Gastrocnemius medialis (tissue), 4 donors: ENCODE measurements at regions of chr1 and their contacts with region 1.

Region 1: DNA sequence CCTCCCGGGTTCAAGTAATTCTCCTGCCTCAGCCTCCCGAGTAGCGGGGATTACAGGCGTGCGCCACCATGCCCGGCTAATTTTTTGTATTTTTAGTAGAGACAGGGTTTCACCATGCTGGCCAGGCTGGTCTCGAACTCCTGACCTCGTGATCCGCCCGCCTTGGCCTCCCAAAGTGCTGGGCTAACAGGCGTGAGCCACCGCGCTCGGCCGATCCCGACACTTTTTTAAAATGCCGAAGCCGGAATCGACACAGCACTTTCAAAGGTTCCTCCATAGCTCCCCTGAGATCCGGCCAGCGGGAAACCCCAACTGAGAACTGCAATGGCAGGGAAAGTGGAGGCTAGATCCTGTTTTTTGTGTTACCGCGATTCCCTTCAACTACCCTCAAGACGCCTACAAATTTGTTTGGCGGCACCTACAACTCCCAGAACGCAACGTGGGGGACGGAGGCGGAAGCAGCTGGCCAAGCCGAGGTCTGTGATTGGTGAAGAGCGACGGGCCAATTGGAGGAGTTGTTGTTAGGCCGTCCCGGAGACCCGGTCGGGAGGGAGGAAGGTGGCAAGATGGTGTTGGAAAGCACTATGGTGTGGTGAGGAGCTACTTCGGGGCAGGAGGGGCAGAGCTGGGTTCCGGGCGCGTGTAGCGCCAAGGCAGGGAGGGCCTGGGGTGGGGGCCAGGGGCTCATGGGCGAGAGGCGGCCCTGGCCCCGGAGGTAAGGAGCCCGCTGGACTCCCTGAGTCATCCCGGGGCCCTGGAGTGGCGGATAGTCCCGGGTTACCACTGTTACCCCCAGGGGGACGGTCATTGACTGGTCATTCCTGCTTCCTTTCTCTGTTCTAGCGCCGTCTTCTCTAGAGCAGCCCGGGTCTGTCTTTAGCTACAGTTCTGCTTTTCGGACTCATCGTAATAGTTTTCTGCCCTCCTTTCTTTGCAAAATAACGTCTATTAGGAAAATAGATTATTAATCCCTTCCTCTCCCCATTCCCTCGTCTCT is at the start of gene PSMD4:
- DNase-seq: peak; percentile 96 to 97
- ATAC-seq: peak; percentile 98 to 99
- H3K4me3 ChIP-seq: peak within 1 kb of the TSS; percentile 81 to 99 (median 89)
- H3K27ac ChIP-seq: peak within 1 kb of the TSS; percentile 90 to 99 (median 97)
- H3K4me1 ChIP-seq: peaks cover 19 to 27% of the 10 kb centered on the region in 2 donors
- H3K27me3 ChIP-seq: no peaks in the 10 kb centered on the region
- CTCF ChIP-seq: no peak
- POLR2A ChIP-seq: peak; percentile 92 to 97
- total RNA-seq, gene PSMD4: 263 to 439 (median 340) TPM

Region 2: GRCh38 chr1:151008190-151008860 is 246.2 kb before region 1 on chr1 and contains the start of gene PRUNE1:
- in situ Hi-C with region 1: no loop called
- intact Hi-C with region 1: loop called (anchors 10 kb)
- DNase-seq: peak; percentile 93 to 96
- ATAC-seq: peak; percentile 79 to 80
- H3K4me3 ChIP-seq: peak within 1 kb of the TSS; percentile 60 to 91 (median 86)
- H3K27ac ChIP-seq: peak within 1 kb of the TSS; percentile 89 to 95 (median 94)
- H3K4me1 ChIP-seq: peaks cover 54 to 62% of the 10 kb centered on the region in 2 donors
- H3K27me3 ChIP-seq: no peaks in the 10 kb centered on the region
- CTCF ChIP-seq: peak in 4 of 5 experiments; percentile 24 to 33 (median 26)
- POLR2A ChIP-seq: peak; percentile 65 to 72
- total RNA-seq, gene PRUNE1: 24.0 to 35.6 (median 29.1) TPM

Region 3: DNA sequence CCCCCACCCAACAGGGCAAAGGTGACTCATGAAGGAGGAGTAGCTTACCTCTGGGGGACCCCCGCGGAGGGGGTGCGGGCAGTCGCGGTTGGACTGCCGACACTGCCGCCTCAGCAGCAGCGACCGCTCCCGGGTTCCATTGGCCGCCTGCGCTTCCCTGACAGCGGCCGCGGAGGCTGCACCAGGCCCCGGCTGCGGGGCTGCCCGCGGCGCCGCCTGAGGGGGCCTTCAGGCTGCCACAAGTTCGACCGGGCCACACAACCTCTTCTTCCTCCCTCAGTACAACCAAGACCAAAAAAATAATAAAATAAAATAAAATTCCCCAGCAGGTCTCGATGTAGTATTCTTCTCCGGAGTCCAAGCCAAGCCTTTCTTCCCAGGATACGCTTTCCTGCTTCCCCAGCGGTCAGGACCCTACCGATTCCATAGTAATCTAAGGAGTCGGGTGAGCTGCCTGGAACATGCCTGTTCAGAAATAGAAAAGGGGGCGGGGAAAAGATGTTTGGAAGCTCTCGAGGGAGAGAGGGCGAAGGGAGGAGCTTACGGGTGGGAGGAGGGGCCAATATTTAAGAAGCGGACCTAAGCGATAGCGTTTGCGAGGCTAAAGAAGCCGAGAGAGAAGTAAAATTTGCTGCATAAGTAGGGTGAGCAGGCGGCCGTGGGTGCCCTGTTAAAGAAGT is 72.8 kb after region 1 on chr1 and contains the start of gene PI4KB:
- in situ Hi-C with region 1: no loop called
- intact Hi-C with region 1: loop called (anchors 1 kb)
- DNase-seq: peak; percentile 92 to 95
- ATAC-seq: peak; percentile 98
- H3K4me3 ChIP-seq: peak within 1 kb of the TSS; percentile 71 to 97 (median 78)
- H3K27ac ChIP-seq: peak within 1 kb of the TSS; percentile 92 to 96 (median 94)
- H3K4me1 ChIP-seq: peaks cover 32 to 40% of the 10 kb centered on the region in 2 donors
- H3K27me3 ChIP-seq: no peaks in the 10 kb centered on the region
- CTCF ChIP-seq: peak in 2 of 5 experiments; percentile 16 to 17
- POLR2A ChIP-seq: peak; percentile 70 to 91
- total RNA-seq, gene PI4KB: 65.5 to 98.1 (median 77.3) TPM

Region 4: DNA sequence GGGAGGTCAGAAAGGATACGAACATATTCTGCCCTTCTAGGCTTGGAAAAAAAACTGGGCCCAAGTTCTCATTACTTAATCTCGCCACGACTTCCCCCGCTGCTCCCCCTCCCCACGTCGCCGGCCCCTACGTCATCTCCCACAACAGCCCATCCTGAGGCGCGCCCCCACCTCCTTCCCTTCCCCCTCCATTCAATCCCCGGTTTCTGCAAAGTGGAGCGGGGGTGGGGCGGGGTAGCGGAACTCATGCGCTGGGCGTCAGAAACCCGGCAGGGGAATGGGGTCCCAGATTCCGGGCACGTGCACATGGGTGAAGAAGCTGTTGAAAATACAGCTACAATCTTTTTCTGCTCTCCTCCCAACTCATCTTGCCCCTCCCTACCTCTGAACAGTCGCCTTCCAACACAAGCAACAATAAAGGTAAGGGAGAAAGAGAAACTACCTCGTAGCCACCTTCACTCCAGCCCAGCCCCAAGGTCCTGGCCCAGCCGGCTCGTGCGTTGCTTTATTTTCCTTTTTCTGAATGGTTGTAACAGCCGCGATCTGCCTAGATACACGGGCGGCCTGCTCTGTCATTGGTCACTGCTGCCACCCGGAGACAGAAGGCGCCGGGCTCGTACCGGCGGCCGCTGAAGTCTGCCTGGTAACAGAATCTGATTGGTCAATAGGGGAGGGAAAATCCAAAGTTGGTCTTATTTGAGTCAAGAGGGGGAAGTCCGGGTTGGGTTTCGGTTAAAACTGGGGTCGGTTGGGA is 92.4 kb after region 1 on chr1 and contains the start of gene RFX5:
- in situ Hi-C with region 1: no loop called
- intact Hi-C with region 1: loop called (anchors 1 kb)
- DNase-seq: peak; percentile 93 to 95
- ATAC-seq: peak; percentile 98 to 99
- H3K4me3 ChIP-seq: peak within 1 kb of the TSS; percentile 59 to 81 (median 71)
- H3K27ac ChIP-seq: peak within 1 kb of the TSS; percentile 83 to 89 (median 86)
- H3K4me1 ChIP-seq: peaks cover 0 to 13% of the 10 kb centered on the region in 2 donors
- H3K27me3 ChIP-seq: no peaks in the 10 kb centered on the region
- CTCF ChIP-seq: no peak
- POLR2A ChIP-seq: peak; percentile 50 to 64
- total RNA-seq, gene RFX5: 11.4 to 24.0 (median 20.6) TPM